ENCODE measurements at regions of chr7 and their contacts with region 1.

Region 1: GRCh38 chr7:63925623-63926460 is 72.8 kb upstream of the ZNF722 start:
- DNase-seq: peak; percentile 75 to 97 (median 94)
- ATAC-seq: peak; percentile 92 to 93
- H3K4me3 Mint-ChIP-seq: peak overlapping the region; percentile 93 to 100 (median 98)
- H3K27ac Mint-ChIP-seq: peak overlapping the region; percentile 95 to 99 (median 98)
- H3K4me1 Mint-ChIP-seq: peaks cover 7 to 19% (median 15%) of the 10 kb centered on the region in 4 donors
- H3K27me3 Mint-ChIP-seq: peaks cover 0 to 3% (median 0%) of the 10 kb centered on the region in 5 donors

Region 2: DNA sequence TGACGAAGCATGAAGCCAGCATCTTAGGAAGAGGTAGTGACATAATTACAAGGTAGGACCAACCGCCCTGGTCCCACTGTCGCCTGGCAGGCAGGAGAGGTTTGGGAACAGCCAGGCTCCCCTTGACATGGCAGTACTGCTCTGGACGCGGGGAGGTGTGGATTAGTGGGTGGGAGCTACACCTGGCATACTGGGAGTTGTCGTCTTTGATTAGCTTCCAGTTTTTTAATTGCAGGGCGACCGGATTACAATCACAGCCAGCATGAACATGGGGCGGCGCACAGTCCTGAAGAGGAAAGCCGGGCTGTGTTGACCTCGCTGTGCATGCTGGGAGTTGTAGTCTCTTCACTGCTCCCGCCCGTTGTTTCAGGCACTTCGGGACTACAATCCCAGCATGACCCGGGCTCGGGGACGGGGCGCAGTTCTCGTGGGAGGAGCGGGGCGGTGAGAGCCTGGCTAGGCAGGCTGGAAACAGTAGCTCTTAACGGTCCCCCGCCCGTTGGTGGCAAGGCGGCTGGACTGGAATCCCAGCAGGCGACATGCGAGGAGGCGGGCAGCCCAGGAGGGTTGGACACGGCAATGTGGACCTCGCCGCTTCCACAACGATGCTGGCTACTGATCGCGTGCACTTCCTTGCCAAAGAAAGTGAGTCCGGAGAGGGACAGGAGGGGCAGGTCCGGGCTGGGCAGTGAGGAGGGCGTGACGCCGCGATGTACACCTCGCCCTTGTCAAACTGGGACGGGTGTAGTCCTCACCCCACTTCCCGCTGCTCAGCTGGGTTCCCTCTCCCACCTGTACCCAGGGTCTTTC is 25.2 kb before region 1 on chr7:
- POLR2A ChIA-PET with region 1: interaction called, 29 read pairs
- DNase-seq: peak; percentile 73 to 97 (median 92)
- ATAC-seq: peak; percentile 91 to 94
- H3K4me3 Mint-ChIP-seq: peak overlapping the region; percentile 89 to 99 (median 96)
- H3K27ac Mint-ChIP-seq: peak overlapping the region; percentile 88 to 100 (median 98)
- H3K4me1 Mint-ChIP-seq: peaks cover 4 to 17% (median 16%) of the 10 kb centered on the region in 4 donors
- H3K27me3 Mint-ChIP-seq: no peaks in the 10 kb centered on the region

Region 3: DNA sequence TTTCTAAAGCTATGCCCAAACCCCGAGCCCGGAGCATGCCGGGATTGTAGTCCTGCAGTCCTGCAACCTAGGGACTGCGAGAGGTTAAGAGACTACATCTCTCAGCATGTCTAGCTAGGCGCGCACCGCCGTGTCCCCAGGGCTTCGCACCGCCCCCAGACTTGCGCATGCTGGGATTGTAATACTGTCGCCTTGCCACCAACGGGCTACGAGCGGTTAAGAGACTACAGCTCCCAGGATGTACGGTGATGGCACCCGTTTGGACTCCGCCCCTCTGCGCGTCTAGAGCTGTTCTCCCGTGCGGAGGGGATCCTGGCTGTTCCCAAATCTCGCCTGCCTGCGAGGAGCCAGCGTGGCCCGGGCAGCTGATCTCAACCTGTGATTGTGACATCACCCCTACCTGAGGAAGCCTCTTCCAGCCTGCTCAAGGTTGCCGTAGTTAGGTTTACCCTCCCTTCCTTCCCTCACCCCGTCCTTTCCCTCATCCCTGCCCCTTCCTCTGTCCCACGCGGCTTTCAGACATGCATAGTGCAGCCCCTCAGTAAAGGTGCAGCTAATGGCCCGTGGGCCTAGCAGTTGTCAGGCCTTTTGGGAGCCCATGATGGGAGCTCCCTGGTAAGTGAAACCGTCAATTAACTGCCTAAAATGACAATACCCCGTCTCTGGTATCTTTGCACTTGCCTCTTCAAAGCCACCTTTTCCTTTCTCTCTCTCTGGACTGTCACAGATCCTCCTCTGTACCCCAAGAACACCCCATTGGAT is 381.6 kb after region 1 on chr7:
- POLR2A ChIA-PET with region 1: interaction called, 19 read pairs
- DNase-seq: peak; percentile 80 to 96 (median 93)
- ATAC-seq: peak; percentile 98
- H3K4me3 Mint-ChIP-seq: peak overlapping the region; percentile 91 to 99 (median 96)
- H3K27ac Mint-ChIP-seq: peak overlapping the region; percentile 95 to 99 (median 98)
- H3K4me1 Mint-ChIP-seq: peaks cover 8 to 42% (median 23%) of the 10 kb centered on the region in 4 donors
- H3K27me3 Mint-ChIP-seq: no peaks in the 10 kb centered on the region

Region 4: DNA sequence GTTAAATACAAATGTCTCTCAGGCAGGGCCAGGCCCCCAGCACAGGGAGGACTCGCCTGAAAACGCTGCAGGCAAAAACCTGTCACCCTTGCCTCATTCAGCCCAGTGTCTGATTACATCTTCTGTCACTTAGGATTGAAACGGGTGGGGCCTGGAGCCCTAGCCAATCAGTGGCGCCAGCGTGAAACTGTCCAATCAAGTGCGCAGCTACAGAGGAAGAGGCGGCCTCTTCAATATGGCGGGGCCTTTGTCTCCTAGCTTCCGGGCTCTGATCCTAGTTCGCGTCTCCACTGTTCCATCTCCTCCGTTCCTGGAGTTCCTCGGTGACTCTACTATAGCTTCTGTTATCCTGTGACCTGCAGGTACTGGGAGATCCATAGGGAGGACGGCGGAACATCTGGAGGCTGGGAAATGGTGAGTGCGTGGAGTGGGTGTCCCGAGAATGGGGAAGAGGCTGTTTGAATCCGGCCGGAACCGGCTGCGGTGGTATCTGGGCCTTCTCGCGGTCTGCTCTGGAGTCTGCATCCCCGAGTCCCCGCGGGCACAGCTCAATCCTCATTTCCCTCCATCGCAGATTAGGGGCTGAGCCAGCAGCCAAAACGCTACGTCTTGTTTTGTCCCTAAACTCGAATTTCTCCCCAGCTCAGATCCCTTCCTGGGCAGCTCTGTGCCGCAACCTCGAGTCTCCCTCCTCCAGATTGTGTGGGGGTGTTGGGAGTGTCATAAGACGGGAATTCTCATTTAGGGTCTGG is 388.1 kb after region 1 on chr7 and contains the start of gene ZNF736:
- POLR2A ChIA-PET with region 1: interaction called, 11 read pairs
- DNase-seq: peak; percentile 66 to 94 (median 86)
- ATAC-seq: peak; percentile 99 to 100
- H3K4me3 Mint-ChIP-seq: peak within 1 kb of the TSS; percentile 93 to 99 (median 98)
- H3K27ac Mint-ChIP-seq: peak within 1 kb of the TSS; percentile 91 to 100 (median 98)
- H3K4me1 Mint-ChIP-seq: peaks cover 10 to 44% (median 40%) of the 10 kb centered on the region in 4 donors
- H3K27me3 Mint-ChIP-seq: no peaks in the 10 kb centered on the region
- polyA plus RNA-seq, gene ZNF736: 2.2 to 4.9 (median 2.3) TPM

Measured in naive thymus-derived CD8-positive, alpha-beta T cell (primary cell).